ENCODE measurements at regions of chr1 and their contacts with region 1.

Region 1: DNA sequence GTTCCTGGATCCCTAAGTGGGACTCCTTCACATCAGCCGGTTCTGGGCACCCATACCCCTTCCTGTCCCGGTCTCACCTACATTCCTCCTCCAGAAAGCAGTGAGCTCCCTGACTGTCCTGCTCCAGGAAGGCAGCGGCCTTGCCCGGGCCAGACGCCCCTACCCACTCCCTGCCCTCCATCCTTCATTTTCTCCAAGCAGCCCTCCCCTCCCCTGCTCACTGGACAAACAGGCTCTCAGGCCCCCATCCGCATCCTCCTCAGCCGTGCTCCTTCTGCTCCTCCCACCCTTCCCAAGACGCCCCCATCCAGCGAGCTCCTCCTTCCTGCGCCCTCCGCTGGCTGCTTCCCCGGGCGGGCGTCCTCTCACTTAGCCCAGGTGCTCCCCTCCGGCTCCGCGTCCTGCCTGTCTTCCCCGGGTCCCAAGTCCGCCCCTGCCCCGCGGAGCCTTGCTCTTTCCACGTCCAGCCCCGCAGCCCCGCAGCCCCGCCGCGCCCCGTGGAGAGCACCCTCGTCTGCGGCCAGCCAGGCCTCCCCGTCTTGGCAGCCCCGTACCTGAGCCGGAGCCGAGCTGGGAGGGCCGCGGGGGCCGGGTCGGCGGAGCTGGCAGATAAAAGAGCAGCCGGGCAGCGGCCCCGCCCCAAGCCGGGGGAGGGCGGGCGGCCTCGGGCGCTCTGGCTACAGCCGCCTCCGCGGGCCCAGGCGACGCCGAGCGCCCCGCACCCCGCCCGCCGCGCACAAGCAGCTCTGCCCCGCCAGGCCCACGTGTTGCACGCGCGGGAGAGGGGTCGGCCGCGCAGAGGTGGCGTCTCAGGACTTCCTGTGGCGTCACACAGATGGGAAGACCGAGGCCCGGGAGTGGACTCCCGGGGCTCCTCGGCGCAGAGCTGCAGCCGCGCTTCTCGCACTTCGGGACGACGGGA is at the start of gene PAQR7:
- DNase-seq: peak in 13 of 14 experiments; percentile 19 to 81 (median 50)
- ATAC-seq: peak; percentile 84
- H3K4me3 ChIP-seq: peak within 1 kb of the TSS; percentile 66
- H3K4me3 Mint-ChIP-seq: peak within 1 kb of the TSS; percentile 88
- H3K27ac ChIP-seq: no peak within 1 kb of the TSS
- H3K27ac Mint-ChIP-seq: peak within 1 kb of the TSS; percentile 67
- H3K4me1 ChIP-seq: peaks cover 17% of the 10 kb centered on the region
- H3K4me1 Mint-ChIP-seq: peaks cover 10% of the 10 kb centered on the region
- H3K27me3 ChIP-seq: no peaks in the 10 kb centered on the region
- H3K27me3 Mint-ChIP-seq: no peaks in the 10 kb centered on the region
- CTCF ChIP-seq: no peak
- total RNA-seq, gene PAQR7: 1.1 to 1.5 TPM

Region 2: GRCh38 chr1:25837262-25837875 is 37.8 kb before region 1 on chr1:
- CTCF ChIA-PET with region 1: no interaction called
- POLR2A ChIA-PET with region 1: no interaction called
- intact Hi-C with region 1: loop called in 1 of 2 experiments (anchors 5 kb)
- DNase-seq: peak in 1 of 14 experiments; percentile 8
- ATAC-seq: no peak
- H3K4me3 ChIP-seq: no peak overlapping the region
- H3K4me3 Mint-ChIP-seq: no peak overlapping the region
- H3K27ac ChIP-seq: no peak overlapping the region
- H3K27ac Mint-ChIP-seq: no peak overlapping the region
- H3K4me1 ChIP-seq: peaks cover under 1% of the 10 kb centered on the region
- H3K4me1 Mint-ChIP-seq: peaks cover 2% of the 10 kb centered on the region
- H3K27me3 ChIP-seq: no peaks in the 10 kb centered on the region
- H3K27me3 Mint-ChIP-seq: no peaks in the 10 kb centered on the region
- CTCF ChIP-seq: peak; percentile 42

Region 3: GRCh38 chr1:25858906-25859789 is 16.0 kb before region 1 on chr1 and contains the start of gene AUNIP:
- CTCF ChIA-PET with region 1: no interaction called
- POLR2A ChIA-PET with region 1: interaction called, 11 read pairs
- intact Hi-C with region 1: no loop called
- DNase-seq: peak; percentile 78 to 97 (median 87)
- ATAC-seq: peak; percentile 99
- H3K4me3 ChIP-seq: peak within 1 kb of the TSS; percentile 72
- H3K4me3 Mint-ChIP-seq: peak within 1 kb of the TSS; percentile 86
- H3K27ac ChIP-seq: peak within 1 kb of the TSS; percentile 31 to 58
- H3K27ac Mint-ChIP-seq: peak within 1 kb of the TSS; percentile 87
- H3K4me1 ChIP-seq: peaks cover 22% of the 10 kb centered on the region
- H3K4me1 Mint-ChIP-seq: peaks cover 20% of the 10 kb centered on the region
- H3K27me3 ChIP-seq: no peaks in the 10 kb centered on the region
- H3K27me3 Mint-ChIP-seq: no peaks in the 10 kb centered on the region
- CTCF ChIP-seq: no peak
- total RNA-seq, gene AUNIP: not detected